Naive thymus-derived CD4-positive, alpha-beta T cell (primary cell): ENCODE measurements at regions of chr4 and their contacts with region 1.

Region 1: DNA sequence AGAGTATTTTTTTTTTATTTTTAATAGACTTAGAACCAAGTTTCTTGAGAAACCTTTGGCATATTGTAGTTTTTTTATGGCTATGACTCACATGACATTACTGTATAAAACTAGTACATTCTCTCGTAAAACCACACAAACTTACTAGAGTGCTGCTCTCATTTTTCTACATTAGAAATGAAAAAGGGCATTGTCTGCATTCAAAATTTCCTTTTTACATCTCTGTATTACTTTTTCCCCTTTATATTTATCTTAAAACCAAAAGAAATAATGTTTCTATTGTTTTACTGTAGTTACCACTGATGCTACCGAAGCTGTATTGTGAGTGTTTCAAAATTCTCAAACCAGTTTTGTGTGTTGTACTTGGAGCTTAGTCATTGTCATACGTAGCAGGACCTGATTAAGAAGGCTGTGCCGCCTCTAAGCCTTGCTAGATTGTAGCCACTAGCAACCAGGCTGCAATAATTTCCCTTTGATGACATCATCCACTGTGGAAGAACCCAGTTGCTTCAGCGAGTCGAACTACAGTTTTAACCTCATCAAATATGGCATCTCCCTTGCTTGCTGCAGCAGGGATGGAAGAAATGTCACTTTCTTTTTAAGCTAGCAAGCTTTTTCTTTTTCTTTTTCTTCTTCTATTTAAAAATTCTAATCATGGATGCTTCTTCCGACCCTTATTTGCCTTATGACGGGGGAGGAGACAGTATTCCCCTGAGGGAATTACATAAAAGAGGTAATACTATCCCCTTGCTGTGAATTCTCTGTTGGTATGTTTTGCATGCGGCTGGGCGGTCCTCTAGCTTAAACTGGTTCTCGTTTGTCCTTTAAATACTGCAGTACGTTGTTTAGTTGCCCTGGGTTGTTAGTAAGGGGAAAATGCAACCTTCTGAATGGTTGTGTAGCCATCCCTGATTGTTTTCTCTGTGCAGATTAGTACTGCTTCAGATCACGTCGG is 39.6 kb downstream of the CLCN3 start:
- DNase-seq: peak in 8 of 9 donors; percentile 52 to 92 (median 74)
- ATAC-seq: peak; percentile 98
- H3K4me3 ChIP-seq: peak overlapping the region; percentile 15
- H3K4me3 Mint-ChIP-seq: peak overlapping the region; percentile 46 to 88 (median 79)
- H3K27ac ChIP-seq: peak overlapping the region; percentile 63
- H3K27ac Mint-ChIP-seq: peak overlapping the region; percentile 79 to 95 (median 89)
- H3K4me1 ChIP-seq: peaks cover 0 to 9% of the 10 kb centered on the region in 2 donors
- H3K4me1 Mint-ChIP-seq: peaks cover 17 to 63% (median 43%) of the 10 kb centered on the region in 7 donors
- H3K27me3 ChIP-seq: no peaks in the 10 kb centered on the region
- H3K27me3 Mint-ChIP-seq: no peaks in the 10 kb centered on the region

Region 2: GRCh38 chr4:168480931-168481611 is 1178.9 kb before region 1 on chr4:
- CTCF ChIA-PET with region 1: no interaction called
- POLR2A ChIA-PET with region 1: no interaction called
- intact Hi-C with region 1: loop called in 1 of 2 experiments (anchors 1 kb)
- DNase-seq: peak in 8 of 9 donors; percentile 22 to 85 (median 78)
- ATAC-seq: peak; percentile 75
- H3K4me3 ChIP-seq: peak overlapping the region; percentile 72
- H3K4me3 Mint-ChIP-seq: peak overlapping the region; percentile 88 to 100 (median 98)
- H3K27ac ChIP-seq: peak overlapping the region; percentile 95
- H3K27ac Mint-ChIP-seq: peak overlapping the region; percentile 98 to 100 (median 99)
- H3K4me1 ChIP-seq: peaks cover 20 to 33% of the 10 kb centered on the region in 2 donors
- H3K4me1 Mint-ChIP-seq: peaks cover 46 to 82% (median 74%) of the 10 kb centered on the region in 7 donors
- H3K27me3 ChIP-seq: no peaks in the 10 kb centered on the region
- H3K27me3 Mint-ChIP-seq: no peaks in the 10 kb centered on the region

Region 3: GRCh38 chr4:169619959-169620879 is 39.8 kb before region 1 on chr4 and contains the start of gene CLCN3:
- CTCF ChIA-PET with region 1: no interaction called
- POLR2A ChIA-PET with region 1: interaction called, 15 read pairs
- intact Hi-C with region 1: loop called (anchors 1 kb)
- DNase-seq: peak; percentile 74 to 90 (median 76)
- ATAC-seq: peak; percentile 88
- H3K4me3 ChIP-seq: peak within 1 kb of the TSS; percentile 92
- H3K4me3 Mint-ChIP-seq: peak within 1 kb of the TSS; percentile 89 to 99 (median 98)
- H3K27ac ChIP-seq: peak within 1 kb of the TSS; percentile 96
- H3K27ac Mint-ChIP-seq: peak within 1 kb of the TSS; percentile 88 to 99 (median 98)
- H3K4me1 ChIP-seq: peaks cover 26 to 32% of the 10 kb centered on the region in 2 donors
- H3K4me1 Mint-ChIP-seq: peaks cover 25 to 76% (median 60%) of the 10 kb centered on the region in 7 donors
- H3K27me3 ChIP-seq: no peaks in the 10 kb centered on the region
- H3K27me3 Mint-ChIP-seq: no peaks in the 10 kb centered on the region
- total RNA-seq, gene CLCN3: 15.5 to 35.0 (median 29.3) TPM

Region 4: DNA sequence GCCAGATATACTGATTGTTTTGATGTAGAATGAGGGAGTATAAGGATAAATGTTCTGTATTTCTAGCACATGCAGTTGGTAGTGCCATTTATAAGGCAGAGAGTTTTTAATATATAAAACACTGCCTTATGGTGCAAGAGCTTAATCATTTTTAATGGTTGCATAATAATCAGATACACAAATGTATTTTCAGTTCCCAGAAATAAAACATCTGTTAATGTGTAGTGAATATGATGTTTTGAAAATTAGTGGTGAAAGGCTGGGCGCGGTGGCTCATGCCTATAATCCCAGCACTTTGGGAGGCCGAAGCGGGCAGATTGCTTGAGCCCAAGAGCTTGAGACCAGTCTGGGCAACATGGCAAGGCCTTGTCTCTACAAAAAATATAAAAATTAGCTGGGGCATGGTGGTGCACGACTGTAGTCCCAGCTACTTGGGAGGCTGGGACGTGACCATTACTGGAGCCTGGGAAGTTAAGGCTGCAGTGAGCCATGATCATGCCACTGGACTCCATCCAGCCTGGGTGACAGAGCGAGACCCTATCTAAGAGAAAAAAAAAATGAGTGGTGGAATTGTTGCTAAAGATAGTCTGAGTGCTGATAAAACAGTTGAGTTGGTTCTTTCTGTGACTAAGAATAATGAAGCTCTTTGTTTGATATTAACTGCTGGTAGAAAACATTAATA is 10.3 kb before region 1 on chr4:
- CTCF ChIA-PET with region 1: interaction called, 3 read pairs
- POLR2A ChIA-PET with region 1: interaction called, 11 read pairs
- intact Hi-C with region 1: no loop called
- DNase-seq: no peak
- ATAC-seq: no peak
- H3K4me3 ChIP-seq: no peak overlapping the region
- H3K4me3 Mint-ChIP-seq: no peak overlapping the region
- H3K27ac ChIP-seq: no peak overlapping the region
- H3K27ac Mint-ChIP-seq: no peak overlapping the region
- H3K4me1 ChIP-seq: no peaks in the 10 kb centered on the region
- H3K4me1 Mint-ChIP-seq: peaks cover 8 to 42% (median 27%) of the 10 kb centered on the region in 7 donors
- H3K27me3 ChIP-seq: no peaks in the 10 kb centered on the region
- H3K27me3 Mint-ChIP-seq: no peaks in the 10 kb centered on the region

Region 5: GRCh38 chr4:169698331-169698730 is 38.3 kb after region 1 on chr4:
- CTCF ChIA-PET with region 1: no interaction called
- POLR2A ChIA-PET with region 1: no interaction called
- intact Hi-C with region 1: loop called in 1 of 2 experiments (anchors 5 kb)
- DNase-seq: no peak
- ATAC-seq: no peak
- H3K4me3 ChIP-seq: no peak overlapping the region
- H3K4me3 Mint-ChIP-seq: no peak overlapping the region
- H3K27ac ChIP-seq: no peak overlapping the region
- H3K27ac Mint-ChIP-seq: peak overlapping the region in 2 of 9 donors; percentile 28 to 51
- H3K4me1 ChIP-seq: no peaks in the 10 kb centered on the region
- H3K4me1 Mint-ChIP-seq: peaks cover 0 to 1% (median 0%) of the 10 kb centered on the region in 7 donors
- H3K27me3 ChIP-seq: no peaks in the 10 kb centered on the region
- H3K27me3 Mint-ChIP-seq: no peaks in the 10 kb centered on the region

Region 6: DNA sequence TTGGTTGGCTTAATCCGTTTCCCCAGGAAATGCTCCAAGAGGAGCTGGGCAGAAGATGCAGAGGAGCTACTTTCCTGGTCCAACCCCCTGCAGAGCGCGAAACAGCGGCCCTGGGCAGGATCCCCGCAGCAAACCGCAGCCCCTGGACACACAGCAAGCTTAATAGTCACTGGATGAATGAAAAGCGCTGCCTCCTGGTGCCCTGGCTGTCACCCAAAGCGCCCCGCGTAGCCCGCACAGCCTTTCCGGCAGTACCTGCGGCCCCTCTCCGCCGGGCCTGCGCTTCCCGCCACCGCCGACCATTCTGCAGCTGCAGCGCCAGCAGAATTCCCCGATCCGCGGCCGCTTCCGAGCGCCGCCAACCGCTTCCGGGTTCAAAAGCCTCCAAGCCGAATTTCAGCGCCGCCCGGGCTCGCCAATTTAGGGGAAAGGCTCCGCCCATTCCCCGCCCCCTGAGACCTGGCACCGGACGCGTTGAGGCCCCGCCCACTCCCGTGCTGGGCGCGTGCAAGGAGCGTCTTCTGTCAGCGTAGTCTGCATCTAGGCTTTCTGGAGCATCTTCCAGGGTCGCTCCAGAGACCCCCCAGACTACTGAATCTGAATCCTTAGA is 97.7 kb after region 1 on chr4 and contains the start of gene HPF1:
- CTCF ChIA-PET with region 1: no interaction called
- POLR2A ChIA-PET with region 1: no interaction called
- intact Hi-C with region 1: loop called in 1 of 2 experiments (anchors 1 kb)
- DNase-seq: peak; percentile 84 to 93 (median 89)
- ATAC-seq: peak; percentile 98
- H3K4me3 ChIP-seq: peak within 1 kb of the TSS; percentile 83
- H3K4me3 Mint-ChIP-seq: peak within 1 kb of the TSS; percentile 82 to 92 (median 88)
- H3K27ac ChIP-seq: peak within 1 kb of the TSS; percentile 66
- H3K27ac Mint-ChIP-seq: peak within 1 kb of the TSS; percentile 52 to 81 (median 71)
- H3K4me1 ChIP-seq: peaks cover 0 to 7% of the 10 kb centered on the region in 2 donors
- H3K4me1 Mint-ChIP-seq: peaks cover 19 to 38% (median 30%) of the 10 kb centered on the region in 7 donors
- H3K27me3 ChIP-seq: no peaks in the 10 kb centered on the region
- H3K27me3 Mint-ChIP-seq: peaks cover 0 to 22% (median 0%) of the 10 kb centered on the region in 5 donors
- total RNA-seq, gene HPF1: 9.9 to 23.5 (median 13.8) TPM

Region 7: DNA sequence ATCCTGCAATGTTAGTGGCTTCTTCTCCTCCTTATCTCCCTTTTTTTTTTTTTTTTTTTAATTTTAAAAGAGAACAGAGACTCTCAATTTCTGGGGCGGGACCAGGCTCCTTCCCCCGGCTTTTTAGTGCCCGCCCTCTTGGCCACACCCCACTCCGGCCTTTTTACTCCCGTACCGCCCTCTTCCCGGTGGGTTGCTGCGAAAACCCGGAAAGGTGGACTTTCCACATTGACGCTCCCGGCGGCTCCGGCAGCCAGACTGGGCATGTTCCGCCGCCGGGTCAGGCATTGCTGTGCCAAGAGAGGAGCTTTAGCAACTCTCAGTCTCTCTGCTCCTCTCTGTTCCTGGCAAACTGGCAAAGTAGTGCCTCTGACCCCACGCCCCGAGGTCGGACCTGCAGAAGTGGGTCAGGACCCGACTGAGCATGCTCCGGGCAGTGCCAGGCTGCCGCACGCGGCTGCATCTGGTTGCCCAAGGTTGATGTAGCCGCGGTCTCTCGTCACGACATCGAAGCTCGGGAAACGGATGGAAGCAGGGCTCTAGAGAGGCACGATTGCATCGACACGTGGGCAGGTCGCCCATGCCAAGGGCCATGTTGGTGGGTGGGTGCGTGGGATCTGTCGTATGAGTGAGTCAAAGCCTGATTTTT is 367.3 kb after region 1 on chr4:
- CTCF ChIA-PET with region 1: no interaction called
- POLR2A ChIA-PET with region 1: no interaction called
- intact Hi-C with region 1: loop called in 1 of 2 experiments (anchors 2 kb)
- DNase-seq: peak; percentile 76 to 92 (median 89)
- ATAC-seq: peak; percentile 83
- H3K4me3 ChIP-seq: peak overlapping the region; percentile 71
- H3K4me3 Mint-ChIP-seq: peak overlapping the region; percentile 86 to 96 (median 94)
- H3K27ac ChIP-seq: peak overlapping the region; percentile 59
- H3K27ac Mint-ChIP-seq: peak overlapping the region; percentile 65 to 89 (median 81)
- H3K4me1 ChIP-seq: peaks cover 0 to 7% of the 10 kb centered on the region in 2 donors
- H3K4me1 Mint-ChIP-seq: peaks cover 6 to 14% (median 11%) of the 10 kb centered on the region in 7 donors
- H3K27me3 ChIP-seq: no peaks in the 10 kb centered on the region
- H3K27me3 Mint-ChIP-seq: peaks cover 0 to 60% (median 8%) of the 10 kb centered on the region in 5 donors

Region 8: DNA sequence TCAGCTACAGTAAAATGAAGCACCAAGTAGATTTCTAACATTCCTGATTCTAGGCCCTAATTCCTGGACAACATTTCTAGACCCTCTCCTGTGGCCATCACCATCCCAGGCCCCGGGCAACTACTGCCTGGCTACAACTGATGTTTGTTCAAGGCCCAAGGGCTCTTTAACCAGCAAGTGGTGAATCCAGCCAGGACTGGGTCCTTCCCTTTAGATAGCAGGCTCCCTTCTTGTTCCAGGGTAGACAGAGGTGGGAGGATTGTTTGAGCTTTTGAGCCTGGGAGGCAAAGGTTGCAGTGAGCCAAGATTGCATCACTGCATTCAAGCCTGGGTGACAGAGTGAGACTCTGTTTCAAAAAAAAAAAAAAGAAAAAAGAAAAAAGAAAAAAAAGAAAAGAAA is 442.4 kb after region 1 on chr4:
- CTCF ChIA-PET with region 1: no interaction called
- POLR2A ChIA-PET with region 1: no interaction called
- intact Hi-C with region 1: no loop called
- DNase-seq: no peak
- ATAC-seq: no peak
- H3K4me3 ChIP-seq: no peak overlapping the region
- H3K4me3 Mint-ChIP-seq: no peak overlapping the region
- H3K27ac ChIP-seq: no peak overlapping the region
- H3K27ac Mint-ChIP-seq: no peak overlapping the region
- H3K4me1 ChIP-seq: no peaks in the 10 kb centered on the region
- H3K4me1 Mint-ChIP-seq: no peaks in the 10 kb centered on the region
- H3K27me3 ChIP-seq: no peaks in the 10 kb centered on the region
- H3K27me3 Mint-ChIP-seq: peaks cover 0 to 26% (median 13%) of the 10 kb centered on the region in 5 donors